Activated B cell treated with CpG ODN at 0.5 μM for 24 hours (primary cell): ENCODE measurements at regions of chr1 and their contacts with region 1.

Region 1: DNA sequence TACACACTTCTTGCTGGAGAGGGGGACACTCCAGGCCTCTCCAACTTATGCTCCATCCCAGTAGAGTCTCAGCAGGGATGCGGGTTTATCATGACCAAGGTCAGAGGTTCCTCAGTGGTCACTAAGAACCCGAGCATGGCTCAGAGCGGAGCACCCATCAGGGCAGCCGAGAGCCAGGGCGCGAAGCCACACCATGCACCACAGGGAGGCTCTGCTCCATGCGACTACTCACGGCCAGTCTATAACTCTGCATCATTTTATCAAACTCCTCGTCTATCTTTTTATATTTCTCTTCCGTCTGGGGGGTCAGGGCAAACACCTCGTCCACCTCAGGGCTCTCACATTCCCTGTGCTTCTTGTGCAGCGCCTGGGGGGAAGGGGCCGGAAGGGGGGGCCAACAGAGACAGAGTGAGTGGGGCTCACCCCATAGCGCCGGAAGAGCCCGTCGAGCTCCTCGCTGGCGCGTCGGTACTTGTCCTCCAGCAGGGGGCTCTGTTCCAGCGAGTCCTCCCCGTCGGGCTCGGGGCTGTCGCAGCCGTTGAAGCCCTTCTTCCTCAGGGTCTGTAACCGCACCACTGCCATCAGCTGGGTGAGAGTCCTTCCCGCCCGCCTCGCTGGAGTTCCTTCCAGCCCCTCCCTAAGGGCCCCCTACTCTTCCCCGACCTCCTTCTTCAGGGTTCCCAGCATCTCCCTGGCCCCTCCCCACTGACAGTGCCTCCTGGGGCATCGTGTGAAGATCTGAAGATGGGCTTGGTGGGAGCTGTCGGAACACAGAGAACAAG is 20.0 kb downstream of the MEF2D start:
- DNase-seq: peak; percentile 65
- ATAC-seq: peak; percentile 87
- H3K4me3 Mint-ChIP-seq: peak overlapping the region; percentile 68
- H3K27ac Mint-ChIP-seq: peak overlapping the region; percentile 87
- H3K4me1 Mint-ChIP-seq: peaks cover 56% of the 10 kb centered on the region
- H3K27me3 Mint-ChIP-seq: no peaks in the 10 kb centered on the region
- CTCF ChIP-seq: peak; percentile 55

Region 2: DNA sequence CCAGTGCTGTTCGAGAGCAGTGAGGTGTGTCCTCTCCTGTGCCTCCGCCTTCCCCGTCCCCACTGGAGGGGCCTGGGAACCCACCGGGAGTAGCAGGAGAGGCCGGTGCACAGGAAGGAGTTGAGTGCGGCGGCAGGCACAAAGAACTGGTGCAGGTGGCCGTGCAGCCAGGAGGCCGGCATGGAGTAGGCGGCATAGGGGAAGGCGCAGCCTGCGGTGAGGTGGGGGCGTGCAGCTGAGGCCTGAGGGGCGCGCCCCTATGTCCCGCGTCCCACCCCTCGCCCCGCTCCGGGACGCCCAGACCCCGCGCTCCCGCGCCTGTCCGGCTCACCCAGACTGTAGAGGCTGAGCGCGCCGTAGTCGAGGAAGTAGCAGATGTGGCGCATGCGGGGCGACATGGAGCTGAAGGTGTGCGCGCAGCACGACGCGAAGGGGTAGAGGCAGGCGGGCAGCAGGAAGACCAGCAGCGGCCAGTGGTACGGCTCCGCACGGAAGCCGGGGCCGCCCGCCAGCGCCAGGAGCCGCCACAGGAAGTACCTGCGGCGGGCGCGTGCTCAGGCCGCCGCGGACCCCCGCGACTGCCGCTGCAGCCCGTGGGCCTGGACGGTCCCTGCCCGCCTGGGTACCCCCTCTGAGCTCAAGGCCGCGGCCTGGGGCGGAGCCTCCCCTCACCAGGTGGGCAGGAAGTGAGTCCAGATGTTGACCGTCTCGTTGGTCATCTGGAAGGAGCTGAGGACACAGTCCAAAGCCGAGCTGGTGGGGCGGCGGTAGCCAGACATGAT is 235.0 kb before region 1 on chr1:
- CTCF ChIA-PET with region 1: no interaction called
- POLR2A ChIA-PET with region 1: no interaction called
- intact Hi-C with region 1: no loop called
- DNase-seq: no peak
- ATAC-seq: peak; percentile 47
- H3K4me3 Mint-ChIP-seq: peak overlapping the region; percentile 80
- H3K27ac Mint-ChIP-seq: no peak overlapping the region
- H3K4me1 Mint-ChIP-seq: peaks cover 17% of the 10 kb centered on the region
- H3K27me3 Mint-ChIP-seq: no peaks in the 10 kb centered on the region
- CTCF ChIP-seq: no peak

Region 3: GRCh38 chr1:156383023-156383422 is 97.6 kb before region 1 on chr1:
- CTCF ChIA-PET with region 1: interaction called, 13 read pairs
- POLR2A ChIA-PET with region 1: no interaction called
- intact Hi-C with region 1: no loop called
- DNase-seq: peak; percentile 46
- ATAC-seq: peak; percentile 97
- H3K4me3 Mint-ChIP-seq: no peak overlapping the region
- H3K27ac Mint-ChIP-seq: no peak overlapping the region
- H3K4me1 Mint-ChIP-seq: peaks cover 6% of the 10 kb centered on the region
- H3K27me3 Mint-ChIP-seq: peaks cover 17% of the 10 kb centered on the region
- CTCF ChIP-seq: no peak

Region 4: DNA sequence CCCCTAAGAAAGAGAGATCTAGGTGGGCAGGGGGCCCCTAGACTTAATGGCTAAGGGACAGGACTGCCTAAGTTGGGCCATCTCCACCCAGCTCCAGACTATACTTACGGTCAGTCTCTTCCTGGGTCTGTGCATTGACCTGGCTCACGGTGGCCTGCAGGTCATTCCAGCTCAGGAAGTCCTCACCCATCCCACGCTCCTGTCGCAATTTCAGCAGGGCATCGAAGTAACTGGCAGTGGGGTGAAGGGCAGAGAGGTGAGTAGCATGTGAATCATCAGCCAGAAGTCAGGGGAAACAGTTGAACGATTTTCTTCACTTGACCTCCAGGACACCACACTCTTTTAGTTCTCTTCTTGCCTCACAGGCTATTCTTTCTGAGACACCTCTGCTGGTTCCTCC is 71.3 kb after region 1 on chr1:
- CTCF ChIA-PET with region 1: interaction called, 9 read pairs
- POLR2A ChIA-PET with region 1: interaction called, 11 read pairs
- intact Hi-C with region 1: loop called (anchors 2 kb)
- DNase-seq: no peak
- ATAC-seq: no peak
- H3K4me3 Mint-ChIP-seq: no peak overlapping the region
- H3K27ac Mint-ChIP-seq: peak overlapping the region; percentile 66
- H3K4me1 Mint-ChIP-seq: peaks cover 49% of the 10 kb centered on the region
- H3K27me3 Mint-ChIP-seq: no peaks in the 10 kb centered on the region
- CTCF ChIP-seq: no peak

Region 5: GRCh38 chr1:156583821-156584622 is 103.4 kb after region 1 on chr1:
- CTCF ChIA-PET with region 1: interaction called, 14 read pairs
- POLR2A ChIA-PET with region 1: interaction called, 36 read pairs
- intact Hi-C with region 1: loop called (anchors 1 kb)
- DNase-seq: no peak
- ATAC-seq: peak; percentile 54
- H3K4me3 Mint-ChIP-seq: peak overlapping the region; percentile 53
- H3K27ac Mint-ChIP-seq: peak overlapping the region; percentile 99
- H3K4me1 Mint-ChIP-seq: peaks cover 33% of the 10 kb centered on the region
- H3K27me3 Mint-ChIP-seq: no peaks in the 10 kb centered on the region
- CTCF ChIP-seq: no peak

Region 6: DNA sequence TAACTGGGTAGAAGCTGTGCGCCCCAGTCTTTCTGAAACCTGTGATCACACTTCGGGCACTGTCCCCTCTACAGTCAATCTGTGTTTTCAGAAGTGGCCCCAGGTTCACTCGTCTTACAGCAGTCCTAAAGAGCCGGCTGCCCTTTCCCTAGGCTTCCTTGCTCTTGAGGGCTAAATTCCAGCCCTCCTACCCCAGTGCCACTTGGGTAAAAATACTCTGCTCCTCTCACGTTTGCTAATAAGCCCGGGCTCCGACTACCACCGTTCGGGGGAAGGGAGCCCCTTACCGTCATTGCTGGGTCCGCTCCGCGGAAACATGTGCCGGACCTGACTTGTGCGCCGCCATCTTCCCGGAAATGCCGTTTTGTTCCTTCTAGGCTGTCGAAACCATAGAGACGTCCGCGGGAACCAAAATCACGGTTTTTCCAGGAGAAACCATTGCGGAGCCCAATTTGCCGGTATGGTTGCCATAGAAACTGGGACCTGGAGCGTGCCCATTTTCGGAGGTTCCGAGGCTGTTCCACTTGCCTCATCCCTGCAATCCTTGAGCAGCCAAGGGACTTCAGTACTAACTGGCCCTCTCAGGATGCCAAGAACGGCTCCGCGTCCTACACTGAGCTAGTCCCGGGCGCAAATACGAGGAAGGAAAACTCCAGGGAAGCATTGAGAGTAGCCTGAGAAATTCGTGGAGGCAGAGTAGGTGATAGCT is 120.7 kb after region 1 on chr1 and contains the start of gene GPATCH4:
- CTCF ChIA-PET with region 1: interaction called, 13 read pairs
- POLR2A ChIA-PET with region 1: interaction called, 8 read pairs
- intact Hi-C with region 1: no loop called
- DNase-seq: peak; percentile 66
- ATAC-seq: peak; percentile 74
- H3K4me3 Mint-ChIP-seq: peak within 1 kb of the TSS; percentile 99
- H3K27ac Mint-ChIP-seq: peak within 1 kb of the TSS; percentile 99
- H3K4me1 Mint-ChIP-seq: peaks cover 41% of the 10 kb centered on the region
- H3K27me3 Mint-ChIP-seq: no peaks in the 10 kb centered on the region
- CTCF ChIP-seq: no peak
- total RNA-seq, gene GPATCH4: 64.6 and 71.8 TPM in 2 replicates